ENCODE measurements at regions of chr16 and their contacts with region 1.

Region 1: DNA sequence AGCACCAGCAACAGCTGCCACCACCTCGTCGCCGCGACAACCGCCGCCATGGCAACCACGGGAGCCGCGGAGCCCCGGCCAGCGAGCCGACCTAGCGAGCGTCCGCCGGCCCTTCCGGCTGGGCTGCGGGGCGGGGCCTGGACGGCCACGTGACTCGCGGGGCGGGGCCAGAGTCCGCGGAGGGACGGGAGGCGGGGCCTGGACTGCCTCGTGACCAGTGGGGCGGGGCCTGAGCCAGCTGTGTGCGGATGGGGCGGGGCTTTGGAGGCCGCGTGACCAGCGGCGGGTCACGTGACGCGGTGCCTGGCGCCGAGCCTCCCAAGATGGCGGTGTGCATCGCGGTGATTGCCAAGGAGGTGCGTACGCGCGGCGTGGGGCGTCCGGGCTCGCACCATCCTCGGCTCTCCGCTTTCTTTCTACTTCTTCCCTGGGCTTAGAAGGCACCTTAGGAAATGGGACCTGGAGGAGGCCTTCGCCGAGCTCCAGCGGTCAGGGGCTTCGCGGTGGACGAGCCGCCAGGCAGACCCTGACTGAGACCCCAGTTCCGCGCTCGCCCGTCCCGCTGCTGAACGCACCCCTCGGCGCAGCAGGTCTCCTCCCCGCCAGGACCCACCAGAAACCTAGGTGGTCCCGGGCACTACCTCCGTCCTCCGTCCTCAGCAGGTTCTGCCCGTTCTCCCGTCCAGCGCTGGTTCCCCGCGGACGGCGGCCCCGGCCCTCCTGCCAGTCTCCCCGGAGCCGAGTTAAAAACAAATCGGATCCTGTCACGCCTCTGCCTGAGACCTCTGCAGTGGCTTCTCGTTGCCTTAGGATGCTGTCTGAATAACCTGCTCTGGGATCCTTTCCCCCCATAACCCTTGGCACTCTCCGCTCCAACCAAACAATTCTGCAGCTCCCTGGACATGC is at the starts of genes GALNS and TRAPPC2L:
- DNase-seq: peak; percentile 95 to 100 (median 98)
- ATAC-seq: peak; percentile 95
- H3K4me3 ChIP-seq: peak within 1 kb of the TSS; percentile 98
- H3K4me3 Mint-ChIP-seq: peak within 1 kb of the TSS; percentile 94 to 100 (median 98)
- H3K27ac ChIP-seq: peak within 1 kb of the TSS; percentile 71
- H3K27ac Mint-ChIP-seq: peak within 1 kb of the TSS; percentile 88 to 100 (median 94)
- H3K4me1 ChIP-seq: peaks cover 20 to 25% of the 10 kb centered on the region in 2 donors
- H3K4me1 Mint-ChIP-seq: peaks cover 24 to 46% (median 41%) of the 10 kb centered on the region in 7 donors
- H3K27me3 ChIP-seq: no peaks in the 10 kb centered on the region
- H3K27me3 Mint-ChIP-seq: no peaks in the 10 kb centered on the region
- total RNA-seq, gene GALNS: 48.6 to 64.3 (median 57.5) TPM
- total RNA-seq, gene TRAPPC2L: 32.3 to 73.4 (median 60.1) TPM

Region 2: DNA sequence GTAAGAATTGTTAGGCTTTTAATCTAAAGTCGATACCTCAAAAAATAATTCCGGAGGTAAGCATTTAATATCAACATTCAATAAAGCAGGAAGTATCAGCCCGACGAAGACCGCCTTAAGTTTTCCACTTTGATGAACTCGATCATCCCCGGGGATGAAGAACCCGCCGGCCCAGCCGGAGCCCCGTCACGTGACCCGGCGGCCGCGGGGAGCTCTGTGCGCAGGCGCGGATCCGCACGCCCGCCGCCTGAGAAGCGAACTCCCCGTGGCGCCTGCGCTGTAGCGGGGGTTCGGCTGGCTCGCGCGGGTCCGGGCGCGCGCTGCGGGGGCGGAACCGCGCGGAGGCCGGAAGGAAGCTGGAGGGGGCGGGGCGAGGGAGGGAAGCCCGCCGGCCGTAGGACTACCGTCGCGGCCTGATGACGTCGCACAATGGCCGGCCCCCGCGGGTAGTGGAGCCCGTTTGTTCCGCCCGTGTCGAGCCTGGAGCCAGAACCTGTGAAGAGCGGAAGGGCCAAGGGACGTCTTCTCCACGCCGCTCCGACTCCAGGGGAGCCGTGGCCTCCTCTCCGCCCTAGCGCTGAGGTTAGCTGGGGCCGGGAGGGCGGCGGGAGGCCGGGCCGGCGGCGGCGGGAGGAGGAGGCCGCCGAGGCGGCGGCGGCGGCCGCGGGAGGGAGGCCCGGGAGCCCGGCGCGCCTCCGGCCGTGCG is 286.9 kb before region 1 on chr16 and contains the start of gene ZC3H18:
- CTCF ChIA-PET with region 1: no interaction called
- POLR2A ChIA-PET with region 1: interaction called, 3 read pairs
- intact Hi-C with region 1: loop called (anchors 2 to 10 kb)
- DNase-seq: peak; percentile 93 to 99 (median 96)
- ATAC-seq: peak; percentile 99
- H3K4me3 ChIP-seq: peak within 1 kb of the TSS; percentile 84
- H3K4me3 Mint-ChIP-seq: peak within 1 kb of the TSS; percentile 81 to 93 (median 87)
- H3K27ac ChIP-seq: peak within 1 kb of the TSS; percentile 91
- H3K27ac Mint-ChIP-seq: peak within 1 kb of the TSS; percentile 45 to 93 (median 89)
- H3K4me1 ChIP-seq: peaks cover 21% of the 10 kb centered on the region in 2 donors
- H3K4me1 Mint-ChIP-seq: peaks cover 10 to 39% (median 34%) of the 10 kb centered on the region in 7 donors
- H3K27me3 ChIP-seq: no peaks in the 10 kb centered on the region
- H3K27me3 Mint-ChIP-seq: no peaks in the 10 kb centered on the region
- total RNA-seq, gene ZC3H18: 74.0 to 97.8 (median 82.6) TPM

Region 3: DNA sequence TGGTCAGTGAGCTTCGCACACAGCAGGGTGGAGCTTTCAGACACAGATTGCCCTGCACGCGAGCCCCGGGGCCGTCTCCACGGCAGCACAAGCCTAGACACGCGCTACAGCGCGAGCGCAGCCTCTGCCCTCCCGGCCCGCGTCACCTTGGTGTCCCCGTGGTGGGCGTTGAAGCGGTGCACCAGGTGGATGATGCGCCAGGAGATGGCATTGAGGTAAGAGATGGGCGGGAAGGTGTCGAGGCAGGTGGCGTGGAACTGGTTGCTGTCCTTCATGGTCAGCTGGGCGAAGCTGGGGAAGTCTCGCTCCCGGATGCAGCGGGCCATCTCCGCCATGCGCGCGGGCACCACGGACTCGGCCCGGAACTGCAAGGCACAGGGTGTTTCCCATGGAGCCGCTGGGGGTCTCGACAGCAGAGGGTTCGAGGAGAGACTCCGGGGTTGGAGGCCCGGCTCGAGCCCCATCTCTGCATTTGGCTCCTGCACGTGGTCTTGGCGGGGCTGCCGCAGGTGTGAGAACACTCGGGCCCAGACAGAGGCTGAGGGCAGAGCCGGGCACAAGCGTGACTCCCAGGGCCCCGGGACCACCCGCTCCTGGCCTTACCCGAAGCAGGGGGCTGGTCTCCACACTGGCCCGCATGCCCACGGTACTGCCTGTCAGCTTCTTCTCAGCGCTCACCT is 201.9 kb before region 1 on chr16:
- CTCF ChIA-PET with region 1: no interaction called
- POLR2A ChIA-PET with region 1: no interaction called
- intact Hi-C with region 1: no loop called
- DNase-seq: no peak
- ATAC-seq: no peak
- H3K4me3 ChIP-seq: no peak overlapping the region
- H3K4me3 Mint-ChIP-seq: no peak overlapping the region
- H3K27ac ChIP-seq: no peak overlapping the region
- H3K27ac Mint-ChIP-seq: peak overlapping the region in 1 of 9 donors; percentile 69
- H3K4me1 ChIP-seq: peaks cover 11 to 13% of the 10 kb centered on the region in 2 donors
- H3K4me1 Mint-ChIP-seq: peaks cover 0 to 16% (median 6%) of the 10 kb centered on the region in 7 donors
- H3K27me3 ChIP-seq: no peaks in the 10 kb centered on the region
- H3K27me3 Mint-ChIP-seq: no peaks in the 10 kb centered on the region

Region 4: DNA sequence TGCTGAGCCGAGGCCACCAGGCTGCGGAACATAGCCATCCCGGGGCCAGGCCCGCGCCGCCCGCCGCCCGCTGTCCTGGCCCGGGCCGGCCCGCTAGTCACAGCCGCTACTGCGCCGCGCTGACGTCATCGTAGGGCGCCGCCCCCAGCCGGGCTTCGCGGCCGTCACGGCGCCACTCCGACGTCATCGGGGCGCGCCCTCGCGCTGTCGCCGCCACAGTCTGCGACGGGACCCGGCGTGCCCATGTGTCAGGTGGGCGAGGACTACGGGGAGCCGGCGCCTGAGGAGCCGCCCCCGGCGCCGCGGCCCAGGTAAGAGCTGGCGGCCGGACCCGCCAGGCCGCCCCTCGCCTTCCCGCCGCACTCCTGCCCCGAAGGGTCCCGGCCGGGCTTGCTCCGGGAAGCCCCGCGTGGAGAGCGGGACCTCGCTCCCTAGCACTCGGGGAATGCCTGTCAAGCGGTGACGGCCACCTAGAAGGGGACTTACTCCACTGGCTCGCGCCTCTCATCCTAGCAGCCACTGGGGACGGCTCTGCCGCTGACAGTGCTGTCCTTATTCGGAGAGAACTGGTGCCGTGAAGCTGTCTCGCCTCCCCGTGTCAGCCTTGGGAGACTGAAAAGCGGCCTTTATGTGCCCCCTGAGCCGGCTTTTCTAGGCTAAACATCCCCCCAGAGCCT is 150.7 kb before region 1 on chr16 and contains the starts of genes CTU2 and RNF166:
- CTCF ChIA-PET with region 1: no interaction called
- POLR2A ChIA-PET with region 1: interaction called, 9 read pairs
- intact Hi-C with region 1: loop called (anchors 1 to 2 kb)
- DNase-seq: peak; percentile 86 to 98 (median 92)
- ATAC-seq: peak; percentile 84
- H3K4me3 ChIP-seq: peak within 1 kb of the TSS; percentile 79
- H3K4me3 Mint-ChIP-seq: peak within 1 kb of the TSS; percentile 78 to 98 (median 94)
- H3K27ac ChIP-seq: peak within 1 kb of the TSS; percentile 88
- H3K27ac Mint-ChIP-seq: peak within 1 kb of the TSS; percentile 85 to 98 (median 97)
- H3K4me1 ChIP-seq: peaks cover 25 to 40% of the 10 kb centered on the region in 2 donors
- H3K4me1 Mint-ChIP-seq: peaks cover 31 to 45% (median 41%) of the 10 kb centered on the region in 7 donors
- H3K27me3 ChIP-seq: no peaks in the 10 kb centered on the region
- H3K27me3 Mint-ChIP-seq: no peaks in the 10 kb centered on the region
- total RNA-seq, gene CTU2: 26.0 to 43.3 (median 28.3) TPM
- total RNA-seq, gene RNF166: 99.8 to 324 (median 133) TPM

Region 5: DNA sequence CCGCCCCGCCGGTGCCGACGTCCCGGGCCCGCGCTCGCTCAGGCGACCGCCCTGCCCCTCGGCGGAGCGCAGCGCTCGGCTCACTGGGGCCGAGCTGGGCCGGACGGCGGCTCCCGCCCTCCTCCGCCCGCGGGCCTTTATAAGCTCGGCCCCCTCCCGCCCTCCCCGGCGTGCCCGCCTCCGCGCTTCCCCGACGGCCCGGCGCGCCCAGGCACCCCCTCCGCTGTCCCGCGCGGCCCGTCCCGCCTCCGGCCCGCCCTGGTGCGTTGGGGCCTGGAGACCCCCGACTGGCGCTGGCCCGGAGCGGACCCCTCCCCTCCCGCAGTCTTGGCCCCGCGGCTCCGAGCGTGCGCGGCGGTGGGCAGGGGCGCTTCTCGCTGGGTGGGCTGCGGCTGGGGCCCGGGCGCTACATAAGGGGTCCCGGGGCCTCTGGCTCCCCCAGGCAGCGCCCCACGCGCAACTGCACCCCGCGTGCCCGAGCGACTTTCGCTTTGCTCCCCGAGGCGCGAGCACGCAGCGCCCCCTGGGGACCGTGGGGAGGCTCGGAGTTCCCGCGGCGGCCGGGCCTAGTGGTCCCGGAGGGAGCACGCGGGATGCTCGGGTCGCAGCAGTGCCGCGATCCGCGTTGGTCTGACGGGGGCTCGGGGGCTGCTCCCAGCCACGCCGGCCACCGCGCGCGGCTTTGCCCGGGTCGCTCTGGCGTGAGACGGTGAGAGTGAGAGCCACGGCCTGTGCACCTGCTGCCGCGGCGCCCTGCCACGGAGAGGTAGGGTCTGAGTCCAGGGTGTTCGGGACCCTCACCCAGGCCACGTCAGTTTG is 71.8 kb before region 1 on chr16 and contains the start of gene PIEZO1:
- CTCF ChIA-PET with region 1: interaction called, 15 read pairs
- POLR2A ChIA-PET with region 1: interaction called, 20 read pairs
- intact Hi-C with region 1: loop called (anchors 1 to 2 kb)
- DNase-seq: peak; percentile 76 to 93 (median 85)
- ATAC-seq: peak; percentile 77
- H3K4me3 ChIP-seq: peak within 1 kb of the TSS; percentile 54
- H3K4me3 Mint-ChIP-seq: peak within 1 kb of the TSS; percentile 66 to 87 (median 76)
- H3K27ac ChIP-seq: peak within 1 kb of the TSS; percentile 72
- H3K27ac Mint-ChIP-seq: peak within 1 kb of the TSS in 6 of 9 donors; percentile 45 to 92 (median 61)
- H3K4me1 ChIP-seq: peaks cover 48 to 49% of the 10 kb centered on the region in 2 donors
- H3K4me1 Mint-ChIP-seq: peaks cover 35 to 45% (median 45%) of the 10 kb centered on the region in 7 donors
- H3K27me3 ChIP-seq: no peaks in the 10 kb centered on the region
- H3K27me3 Mint-ChIP-seq: no peaks in the 10 kb centered on the region
- total RNA-seq, gene PIEZO1: 84.5 to 237 (median 124) TPM

Region 6: DNA sequence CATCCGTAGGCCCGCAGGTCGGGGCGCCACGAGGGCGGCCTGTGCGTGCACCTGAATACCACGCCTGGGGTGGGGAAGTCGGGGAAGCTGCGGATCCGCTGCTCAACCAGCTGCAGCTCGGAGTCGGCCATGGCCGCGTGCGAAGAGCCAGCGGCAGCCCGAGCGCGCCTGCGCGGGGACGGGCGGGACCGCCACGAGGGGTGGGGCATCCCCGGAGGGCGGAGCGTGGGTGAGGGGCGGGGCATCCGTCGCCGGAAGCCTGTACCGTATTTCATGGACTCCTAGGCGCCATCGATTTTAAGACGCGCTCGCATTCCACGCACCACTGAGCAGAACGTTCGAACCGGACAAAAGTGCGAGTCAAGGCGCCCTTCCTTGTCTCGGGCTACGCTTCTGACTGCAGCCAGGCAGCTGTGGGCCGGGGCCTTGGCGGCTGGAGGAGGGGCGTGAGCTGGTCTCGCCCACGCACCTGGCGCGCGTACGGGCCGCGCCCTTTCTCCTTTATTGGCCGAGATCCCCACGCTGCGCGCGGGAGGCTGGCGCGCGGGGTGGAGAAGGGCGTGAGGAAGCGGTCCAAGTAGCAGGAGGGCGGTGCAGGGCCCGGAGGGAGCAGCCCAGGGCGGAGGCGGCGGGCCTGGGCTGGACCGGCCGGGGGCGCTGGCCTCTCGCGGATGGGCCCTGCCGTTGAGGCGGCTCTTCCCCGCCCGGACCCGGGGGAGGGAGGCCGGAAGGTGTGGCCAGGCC is 45.1 kb before region 1 on chr16 and contains the start of gene APRT:
- CTCF ChIA-PET with region 1: interaction called, 15 read pairs
- POLR2A ChIA-PET with region 1: interaction called, 42 read pairs
- intact Hi-C with region 1: loop called (anchors 1 kb)
- DNase-seq: peak; percentile 92 to 100 (median 98)
- ATAC-seq: peak; percentile 95
- H3K4me3 ChIP-seq: peak within 1 kb of the TSS; percentile 97
- H3K4me3 Mint-ChIP-seq: peak within 1 kb of the TSS; percentile 92 to 99 (median 96)
- H3K27ac ChIP-seq: peak within 1 kb of the TSS; percentile 84
- H3K27ac Mint-ChIP-seq: peak within 1 kb of the TSS; percentile 79 to 98 (median 95)
- H3K4me1 ChIP-seq: peaks cover 8 to 11% of the 10 kb centered on the region in 2 donors
- H3K4me1 Mint-ChIP-seq: peaks cover 0 to 26% (median 12%) of the 10 kb centered on the region in 7 donors
- H3K27me3 ChIP-seq: no peaks in the 10 kb centered on the region
- H3K27me3 Mint-ChIP-seq: no peaks in the 10 kb centered on the region
- total RNA-seq, gene APRT: 134 to 178 (median 161) TPM

Region 7: GRCh38 chr16:89115216-89115861 is 258.3 kb after region 1 on chr16:
- CTCF ChIA-PET with region 1: interaction called, 3 read pairs
- POLR2A ChIA-PET with region 1: interaction called, 4 read pairs
- intact Hi-C with region 1: loop called in 1 of 2 experiments (anchors 1 kb)
- DNase-seq: peak; percentile 73 to 98 (median 96)
- ATAC-seq: peak; percentile 95
- H3K4me3 ChIP-seq: peak overlapping the region; percentile 59
- H3K4me3 Mint-ChIP-seq: peak overlapping the region; percentile 81 to 92 (median 87)
- H3K27ac ChIP-seq: peak overlapping the region; percentile 89
- H3K27ac Mint-ChIP-seq: peak overlapping the region in 6 of 9 donors; percentile 95 to 100 (median 96)
- H3K4me1 ChIP-seq: peaks cover 30 to 52% of the 10 kb centered on the region in 2 donors
- H3K4me1 Mint-ChIP-seq: peaks cover 30 to 66% (median 50%) of the 10 kb centered on the region in 7 donors
- H3K27me3 ChIP-seq: no peaks in the 10 kb centered on the region
- H3K27me3 Mint-ChIP-seq: no peaks in the 10 kb centered on the region

Region 8: GRCh38 chr16:89193021-89193575 is 336.0 kb after region 1 on chr16:
- CTCF ChIA-PET with region 1: no interaction called
- POLR2A ChIA-PET with region 1: no interaction called
- intact Hi-C with region 1: loop called in 1 of 2 experiments (anchors 2 kb)
- DNase-seq: peak in 6 of 9 donors; percentile 45 to 61 (median 52)
- ATAC-seq: no peak
- H3K4me3 ChIP-seq: no peak overlapping the region
- H3K4me3 Mint-ChIP-seq: peak overlapping the region in 3 of 10 donors; percentile 6 to 47 (median 25)
- H3K27ac ChIP-seq: no peak overlapping the region
- H3K27ac Mint-ChIP-seq: no peak overlapping the region
- H3K4me1 ChIP-seq: no peaks in the 10 kb centered on the region
- H3K4me1 Mint-ChIP-seq: peaks cover 0 to 5% (median 0%) of the 10 kb centered on the region in 7 donors
- H3K27me3 ChIP-seq: no peaks in the 10 kb centered on the region
- H3K27me3 Mint-ChIP-seq: peaks cover 0 to 8% (median 2%) of the 10 kb centered on the region in 5 donors